PC-9 (cell line): ENCODE measurements at regions of chr2 and their contacts with region 1.

Region 1: GRCh38 chr2:66434679-66435548 is at the start of gene MEIS1:
- DNase-seq: peak; percentile 81 to 90
- H3K4me3 ChIP-seq: peak within 1 kb of the TSS; percentile 72
- H3K27ac ChIP-seq: peak within 1 kb of the TSS; percentile 48
- H3K4me1 ChIP-seq: peaks cover 13% of the 10 kb centered on the region
- H3K27me3 ChIP-seq: no peaks in the 10 kb centered on the region
- CTCF ChIP-seq: no peak
- total RNA-seq, gene MEIS1: 5.4 and 9.1 TPM in 2 replicates

Region 2: GRCh38 chr2:65566620-65567019 is 868.3 kb before region 1 on chr2:
- CTCF ChIA-PET with region 1: no interaction called
- POLR2A ChIA-PET with region 1: interaction called, 23 read pairs
- intact Hi-C with region 1: no loop called
- DNase-seq: peak; percentile 21 to 54
- H3K4me3 ChIP-seq: peak overlapping the region; percentile 24; the same call in 1 of the 2 replicates
- H3K27ac ChIP-seq: 0 out of 2 replicates have a peak overlapping the region, but pooled peaks have one; percentile 31
- H3K4me1 ChIP-seq: peaks cover 10% of the 10 kb centered on the region; the same call in 1 of the 2 replicates
- H3K27me3 ChIP-seq: no peaks in the 10 kb centered on the region
- CTCF ChIP-seq: no peak

Region 3: DNA sequence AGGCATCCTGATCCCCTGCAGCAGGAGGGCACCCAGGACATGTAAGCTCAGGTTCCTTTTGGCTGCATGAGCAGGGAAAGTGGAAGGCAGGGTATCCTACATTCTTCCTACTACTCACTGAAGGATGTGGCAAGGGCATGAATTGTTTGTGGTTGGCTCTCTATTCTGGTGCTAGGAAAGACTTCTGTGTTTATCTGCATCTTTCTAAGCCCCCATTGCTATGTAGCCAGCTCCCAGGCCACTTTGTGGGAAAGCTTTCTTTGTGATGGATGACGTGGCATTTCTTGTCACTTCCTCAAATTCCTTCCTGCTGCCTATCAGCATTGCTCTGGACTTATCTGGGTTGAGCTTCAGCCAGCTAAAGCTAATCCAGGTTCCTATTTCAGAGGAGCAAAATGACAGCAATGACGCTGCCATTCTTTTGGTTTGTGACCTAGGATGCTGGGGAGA is 46.2 kb after region 1 on chr2:
- CTCF ChIA-PET with region 1: interaction called, 6 read pairs
- POLR2A ChIA-PET with region 1: interaction called, 45 read pairs
- intact Hi-C with region 1: no loop called
- DNase-seq: peak; percentile 57 to 74
- H3K4me3 ChIP-seq: no peak overlapping the region
- H3K27ac ChIP-seq: peak overlapping the region; percentile 62
- H3K4me1 ChIP-seq: peaks cover 12% of the 10 kb centered on the region
- H3K27me3 ChIP-seq: no peaks in the 10 kb centered on the region
- CTCF ChIP-seq: no peak

Region 4: GRCh38 chr2:66495788-66496640 is 61.1 kb after region 1 on chr2:
- CTCF ChIA-PET with region 1: interaction called, 9 read pairs
- POLR2A ChIA-PET with region 1: no interaction called
- intact Hi-C with region 1: loop called (anchors 1 kb)
- DNase-seq: peak; percentile 89 to 92
- H3K4me3 ChIP-seq: peak overlapping the region; percentile 32; the same call in 1 of the 2 replicates
- H3K27ac ChIP-seq: peak overlapping the region; percentile 91
- H3K4me1 ChIP-seq: peaks cover 46% of the 10 kb centered on the region
- H3K27me3 ChIP-seq: no peaks in the 10 kb centered on the region
- CTCF ChIP-seq: peak; percentile 55; the same call in 1 of the 2 replicates

Region 5: GRCh38 chr2:66574701-66575624 is 140.0 kb after region 1 on chr2:
- CTCF ChIA-PET with region 1: interaction called, 21 read pairs
- POLR2A ChIA-PET with region 1: no interaction called
- intact Hi-C with region 1: loop called (anchors 1 kb)
- DNase-seq: peak; percentile 41 to 56
- H3K4me3 ChIP-seq: peak overlapping the region; percentile 65; the same call in 1 of the 2 replicates
- H3K27ac ChIP-seq: no peak overlapping the region
- H3K4me1 ChIP-seq: 0 out of 2 replicates have a peak, but pooled peaks cover 19% of the 10 kb centered on the region
- H3K27me3 ChIP-seq: peaks cover 27% of the 10 kb centered on the region; the same call in 1 of the 2 replicates
- CTCF ChIP-seq: peak; percentile 78

Region 6: GRCh38 chr2:66901344-66901743 is 466.4 kb after region 1 on chr2:
- CTCF ChIA-PET with region 1: no interaction called
- POLR2A ChIA-PET with region 1: no interaction called
- intact Hi-C with region 1: no loop called
- DNase-seq: no peak
- H3K4me3 ChIP-seq: no peak overlapping the region
- H3K27ac ChIP-seq: no peak overlapping the region
- H3K4me1 ChIP-seq: no peaks in the 10 kb centered on the region
- H3K27me3 ChIP-seq: no peaks in the 10 kb centered on the region
- CTCF ChIP-seq: no peak

Region 7: GRCh38 chr2:68157402-68158133 is 1722.7 kb after region 1 on chr2 and contains the start of gene PNO1:
- CTCF ChIA-PET with region 1: no interaction called
- POLR2A ChIA-PET with region 1: interaction called, 15 read pairs
- intact Hi-C with region 1: no loop called
- DNase-seq: peak; percentile 88 to 95
- H3K4me3 ChIP-seq: peak within 1 kb of the TSS; percentile 87
- H3K27ac ChIP-seq: peak within 1 kb of the TSS; percentile 69
- H3K4me1 ChIP-seq: peaks cover 14% of the 10 kb centered on the region
- H3K27me3 ChIP-seq: no peaks in the 10 kb centered on the region
- CTCF ChIP-seq: no peak
- total RNA-seq, gene PNO1: 11.2 and 17.8 TPM in 2 replicates